Dendritic cell treated with granulocyte-macrophage colony-stimulating factor and Interleukin-4, amounts not matched to agents 40 ng/mL and 50 ng/mL, for 4 days (primary cell): ENCODE measurements at regions of chr2 and their contacts with region 1.

Region 1: GRCh38 chr2:125696561-125696960 is 959.4 kb upstream of the GYPC start:
- H3K4me3 Mint-ChIP-seq: no peak overlapping the region
- H3K27ac Mint-ChIP-seq: no peak overlapping the region
- H3K4me1 Mint-ChIP-seq: no peaks in the 10 kb centered on the region
- H3K27me3 Mint-ChIP-seq: no peaks in the 10 kb centered on the region

Region 2: GRCh38 chr2:125596612-125597011 is 99.9 kb before region 1 on chr2:
- intact Hi-C with region 1: no loop called
- H3K4me3 Mint-ChIP-seq: no peak overlapping the region
- H3K27ac Mint-ChIP-seq: no peak overlapping the region
- H3K4me1 Mint-ChIP-seq: no peaks in the 10 kb centered on the region
- H3K27me3 Mint-ChIP-seq: no peaks in the 10 kb centered on the region

Region 3: GRCh38 chr2:125684256-125684655 is 12.3 kb before region 1 on chr2:
- intact Hi-C with region 1: loop called (anchors 1 kb)
- H3K4me3 Mint-ChIP-seq: no peak overlapping the region
- H3K27ac Mint-ChIP-seq: no peak overlapping the region
- H3K4me1 Mint-ChIP-seq: no peaks in the 10 kb centered on the region
- H3K27me3 Mint-ChIP-seq: no peaks in the 10 kb centered on the region